CD4-positive, alpha-beta memory T cell (primary cell): ENCODE measurements at regions of chr2 and their contacts with region 1.

Region 1: DNA sequence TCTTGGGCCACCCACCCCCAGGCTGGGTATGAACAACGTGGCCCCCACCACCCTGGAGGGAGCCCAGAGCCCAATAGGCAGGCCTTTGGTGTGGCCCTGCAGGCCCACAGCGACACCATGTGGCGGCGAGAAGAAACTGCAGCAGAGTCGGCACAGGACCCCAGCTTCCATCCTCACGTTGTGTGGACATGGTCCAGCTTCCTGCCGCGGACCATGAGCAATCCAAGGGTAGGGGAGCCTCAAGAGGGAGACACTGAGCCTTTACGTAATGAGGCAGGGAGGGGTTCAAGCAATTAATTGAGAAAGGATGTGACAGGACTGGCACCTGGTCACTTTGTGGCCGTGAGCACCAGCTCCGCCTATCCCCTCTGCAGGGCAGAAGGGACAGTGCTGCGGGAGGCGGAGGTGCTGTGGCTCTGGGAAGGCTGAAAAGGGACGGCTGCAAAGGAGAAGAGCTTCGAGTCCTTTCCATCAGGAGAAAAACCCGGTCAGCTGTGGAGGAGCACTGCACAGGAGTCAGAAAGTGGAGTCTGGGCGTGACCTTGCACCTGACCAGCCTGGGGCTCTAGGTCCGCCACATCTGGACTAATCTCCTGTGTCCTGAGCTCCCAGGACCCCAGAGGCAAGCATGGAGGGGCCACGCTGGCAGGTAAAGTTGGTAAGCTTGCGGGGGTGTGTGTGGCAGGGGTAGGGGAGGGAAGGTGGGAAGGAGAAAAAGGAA is 44.8 kb downstream of the TMEM37 start:
- DNase-seq: peak in 4 of 5 donors; percentile 9 to 19 (median 12)
- H3K4me3 ChIP-seq: no peak overlapping the region
- H3K4me3 Mint-ChIP-seq: no peak overlapping the region
- H3K27ac ChIP-seq: no peak overlapping the region
- H3K27ac Mint-ChIP-seq: no peak overlapping the region
- H3K4me1 ChIP-seq: no peaks in the 10 kb centered on the region
- H3K4me1 Mint-ChIP-seq: no peaks in the 10 kb centered on the region
- H3K27me3 ChIP-seq: no peaks in the 10 kb centered on the region
- H3K27me3 Mint-ChIP-seq: peaks cover 8% of the 10 kb centered on the region in 2 donors

Region 2: DNA sequence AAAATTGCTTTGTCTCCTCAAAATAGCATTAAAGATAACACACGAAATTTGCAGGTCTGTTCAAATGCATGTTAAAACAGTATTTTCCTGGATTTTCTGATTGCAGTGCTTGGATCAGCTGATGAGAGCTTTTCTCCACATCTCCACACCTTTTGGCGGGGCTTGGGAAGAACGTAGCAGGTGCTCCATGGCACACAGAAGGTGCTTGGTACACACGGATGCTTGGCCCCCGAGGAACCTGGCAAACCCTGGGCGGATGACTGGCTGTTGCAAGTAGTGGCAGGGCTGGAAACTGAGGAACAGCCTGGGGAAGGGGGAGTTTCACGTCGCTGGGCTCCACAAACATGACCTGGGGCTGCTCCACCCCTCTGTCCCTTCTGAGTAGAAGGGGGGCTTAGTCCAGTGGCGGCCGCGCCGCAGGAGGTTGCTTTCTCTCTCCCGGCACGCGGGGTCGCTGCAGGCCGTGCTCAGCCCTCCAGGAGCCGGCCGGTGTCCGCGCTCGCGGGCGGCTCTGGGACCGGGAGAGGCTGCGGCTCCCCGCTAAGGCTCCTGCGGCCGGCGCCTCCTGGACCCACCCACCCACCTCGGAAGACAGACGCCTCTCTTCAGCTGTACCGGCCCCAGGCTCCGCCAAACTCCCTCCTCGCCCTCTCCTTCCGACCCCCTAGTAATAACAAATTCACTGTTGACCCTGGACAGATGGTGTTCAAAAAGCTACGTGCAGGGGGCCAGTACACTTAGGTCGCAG is 465.1 kb before region 1 on chr2:
- CTCF ChIA-PET with region 1: no interaction called
- POLR2A ChIA-PET with region 1: no interaction called
- intact Hi-C with region 1: no loop called
- DNase-seq: no peak
- H3K4me3 ChIP-seq: no peak overlapping the region
- H3K4me3 Mint-ChIP-seq: no peak overlapping the region
- H3K27ac ChIP-seq: no peak overlapping the region
- H3K27ac Mint-ChIP-seq: no peak overlapping the region
- H3K4me1 ChIP-seq: no peaks in the 10 kb centered on the region
- H3K4me1 Mint-ChIP-seq: peaks cover 0 to 1% (median 0%) of the 10 kb centered on the region in 4 donors
- H3K27me3 ChIP-seq: no peaks in the 10 kb centered on the region
- H3K27me3 Mint-ChIP-seq: peaks cover 19% of the 10 kb centered on the region in 2 donors

Region 3: GRCh38 chr2:119407430-119408220 is 68.8 kb before region 1 on chr2:
- CTCF ChIA-PET with region 1: no interaction called
- POLR2A ChIA-PET with region 1: no interaction called
- intact Hi-C with region 1: loop called (anchors 5 kb)
- DNase-seq: peak in 3 of 5 donors; percentile 10 to 18 (median 11)
- H3K4me3 ChIP-seq: no peak overlapping the region
- H3K4me3 Mint-ChIP-seq: no peak overlapping the region
- H3K27ac ChIP-seq: no peak overlapping the region
- H3K27ac Mint-ChIP-seq: no peak overlapping the region
- H3K4me1 ChIP-seq: no peaks in the 10 kb centered on the region
- H3K4me1 Mint-ChIP-seq: no peaks in the 10 kb centered on the region
- H3K27me3 ChIP-seq: no peaks in the 10 kb centered on the region
- H3K27me3 Mint-ChIP-seq: peaks cover 2 to 6% of the 10 kb centered on the region in 2 donors

Region 4: GRCh38 chr2:119422360-119423107 is 53.9 kb before region 1 on chr2:
- CTCF ChIA-PET with region 1: no interaction called
- POLR2A ChIA-PET with region 1: no interaction called
- intact Hi-C with region 1: no loop called
- DNase-seq: no peak
- H3K4me3 ChIP-seq: no peak overlapping the region
- H3K4me3 Mint-ChIP-seq: no peak overlapping the region
- H3K27ac ChIP-seq: no peak overlapping the region
- H3K27ac Mint-ChIP-seq: no peak overlapping the region
- H3K4me1 ChIP-seq: no peaks in the 10 kb centered on the region
- H3K4me1 Mint-ChIP-seq: no peaks in the 10 kb centered on the region
- H3K27me3 ChIP-seq: no peaks in the 10 kb centered on the region
- H3K27me3 Mint-ChIP-seq: peaks cover 34 to 39% of the 10 kb centered on the region in 2 donors

Region 5: GRCh38 chr2:119678998-119679710 is 202.7 kb after region 1 on chr2 and contains the start of gene TMEM177:
- CTCF ChIA-PET with region 1: no interaction called
- POLR2A ChIA-PET with region 1: no interaction called
- intact Hi-C with region 1: no loop called
- DNase-seq: peak; percentile 86 to 89 (median 88)
- H3K4me3 ChIP-seq: peak within 1 kb of the TSS; percentile 55 to 84
- H3K4me3 Mint-ChIP-seq: peak within 1 kb of the TSS; percentile 75 to 96 (median 94)
- H3K27ac ChIP-seq: peak within 1 kb of the TSS; percentile 75
- H3K27ac Mint-ChIP-seq: peak within 1 kb of the TSS; percentile 92 to 98 (median 97)
- H3K4me1 ChIP-seq: peaks cover 17% of the 10 kb centered on the region
- H3K4me1 Mint-ChIP-seq: peaks cover 21 to 49% (median 35%) of the 10 kb centered on the region in 4 donors
- H3K27me3 ChIP-seq: no peaks in the 10 kb centered on the region
- H3K27me3 Mint-ChIP-seq: peaks cover 0 to 6% of the 10 kb centered on the region in 2 donors
- total RNA-seq, gene TMEM177: 22.5 to 23.9 TPM